PC-3 (cell line): ENCODE measurements at regions of chr10 and their contacts with region 1.

Region 1: GRCh38 chr10:70903262-70903921 is 15.0 kb upstream of the PCBD1 start:
- DNase-seq: peak; percentile 87
- ATAC-seq: peak; percentile 65
- H3K4me3 ChIP-seq: no peak overlapping the region
- H3K27ac ChIP-seq: no peak overlapping the region
- H3K4me1 ChIP-seq: peaks cover 11% of the 10 kb centered on the region
- H3K27me3 ChIP-seq: no peaks in the 10 kb centered on the region
- CTCF ChIP-seq: peak; percentile 100

Region 2: GRCh38 chr10:70753026-70753663 is 150.2 kb before region 1 on chr10:
- CTCF ChIA-PET with region 1: no interaction called
- POLR2A ChIA-PET with region 1: no interaction called
- intact Hi-C with region 1: no loop called
- DNase-seq: no peak
- ATAC-seq: no peak
- H3K4me3 ChIP-seq: no peak overlapping the region
- H3K27ac ChIP-seq: no peak overlapping the region
- H3K4me1 ChIP-seq: peaks cover 8% of the 10 kb centered on the region
- H3K27me3 ChIP-seq: no peaks in the 10 kb centered on the region
- CTCF ChIP-seq: no peak

Region 3: DNA sequence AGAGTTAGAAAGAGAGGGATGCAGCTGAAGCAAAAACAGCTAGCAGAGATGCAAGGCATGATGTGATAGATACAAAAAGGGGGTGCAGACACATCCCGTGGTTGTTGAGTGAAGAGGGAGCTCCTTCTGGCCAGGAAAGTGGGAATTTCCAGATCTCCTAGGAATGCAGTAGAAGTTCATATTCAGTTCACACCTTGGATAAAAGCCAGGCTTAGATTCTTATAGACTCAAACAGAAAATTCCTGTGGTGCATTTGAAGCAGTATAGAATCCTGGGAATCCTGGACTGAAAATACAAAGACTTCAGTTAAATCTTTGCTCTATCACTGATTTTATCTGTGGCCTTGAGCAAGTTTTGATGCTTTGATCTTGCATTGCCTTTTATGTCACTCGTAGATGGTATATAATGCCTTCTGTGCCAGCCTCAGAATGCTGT is 53.8 kb before region 1 on chr10:
- CTCF ChIA-PET with region 1: no interaction called
- POLR2A ChIA-PET with region 1: no interaction called
- intact Hi-C with region 1: no loop called
- DNase-seq: peak; percentile 76
- ATAC-seq: peak; percentile 19; the same call in 1 of the 2 replicates
- H3K4me3 ChIP-seq: no peak overlapping the region
- H3K27ac ChIP-seq: no peak overlapping the region
- H3K4me1 ChIP-seq: peaks cover 33% of the 10 kb centered on the region
- H3K27me3 ChIP-seq: no peaks in the 10 kb centered on the region
- CTCF ChIP-seq: no peak

Region 4: GRCh38 chr10:70887804-70888800 is 15.3 kb before region 1 on chr10 and contains the start of gene PCBD1:
- CTCF ChIA-PET with region 1: interaction called, 10 read pairs
- POLR2A ChIA-PET with region 1: interaction called, 4 read pairs
- intact Hi-C with region 1: no loop called
- DNase-seq: peak; percentile 92
- ATAC-seq: peak; percentile 91
- H3K4me3 ChIP-seq: peak within 1 kb of the TSS; percentile 86
- H3K27ac ChIP-seq: peak within 1 kb of the TSS; percentile 47
- H3K4me1 ChIP-seq: peaks cover 31% of the 10 kb centered on the region
- H3K27me3 ChIP-seq: no peaks in the 10 kb centered on the region
- CTCF ChIP-seq: 0 out of 2 replicates have a peak, but pooled peaks have one; percentile 9
- total RNA-seq, gene PCBD1: 277 and 283 TPM in 2 replicates